Activated T-helper 2 cell treated with anti-CD3 and anti-CD28 coated beads, Interferon-gamma antibody, Interleukin-2, Interleukin-4, amounts not matched to agents 10 μg/mL and 5 μg/mL and 100 μg/mL, durations not matched to agents 14 hours and 24 hours and 36 hours (primary cell): ENCODE measurements at regions of chr11 and their contacts with region 1.

Region 1: GRCh38 chr11:121032546-121032945 is 8.6 kb downstream of the TBCEL start:
- DNase-seq: no peak
- H3K4me3 Mint-ChIP-seq: no peak overlapping the region
- H3K27ac Mint-ChIP-seq: no peak overlapping the region
- H3K4me1 Mint-ChIP-seq: peaks cover 30% of the 10 kb centered on the region
- H3K27me3 Mint-ChIP-seq: peaks cover 3% of the 10 kb centered on the region

Region 2: GRCh38 chr11:120344302-120345004 is 688.1 kb before region 1 on chr11:
- intact Hi-C with region 1: loop called (anchors 10 kb)
- DNase-seq: peak; percentile 62
- H3K4me3 Mint-ChIP-seq: peak overlapping the region; percentile 23
- H3K27ac Mint-ChIP-seq: peak overlapping the region; percentile 9
- H3K4me1 Mint-ChIP-seq: peaks cover 37% of the 10 kb centered on the region
- H3K27me3 Mint-ChIP-seq: peaks cover 59% of the 10 kb centered on the region

Region 3: DNA sequence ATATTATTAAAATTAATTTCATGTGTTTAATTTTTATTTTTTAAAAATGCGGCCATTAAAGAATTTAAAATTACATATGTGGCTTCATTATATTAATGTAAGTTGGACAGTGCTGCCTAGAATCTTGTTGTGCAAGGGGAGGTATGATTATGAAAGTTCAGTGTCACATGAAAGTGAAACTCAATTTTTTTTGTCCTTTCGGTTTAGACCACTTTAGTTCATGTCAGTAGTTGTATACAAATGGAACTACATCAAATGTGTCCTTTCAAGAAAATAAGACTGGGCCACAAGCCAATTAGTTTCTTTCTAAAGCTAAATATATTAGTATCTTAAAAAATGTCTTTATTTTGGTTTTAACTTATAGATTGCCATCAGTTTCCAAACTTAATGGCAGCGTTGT is 27.1 kb after region 1 on chr11:
- intact Hi-C with region 1: loop called (anchors 2 kb)
- DNase-seq: no peak
- H3K4me3 Mint-ChIP-seq: no peak overlapping the region
- H3K27ac Mint-ChIP-seq: no peak overlapping the region
- H3K4me1 Mint-ChIP-seq: peaks cover 10% of the 10 kb centered on the region
- H3K27me3 Mint-ChIP-seq: no peaks in the 10 kb centered on the region

Region 4: DNA sequence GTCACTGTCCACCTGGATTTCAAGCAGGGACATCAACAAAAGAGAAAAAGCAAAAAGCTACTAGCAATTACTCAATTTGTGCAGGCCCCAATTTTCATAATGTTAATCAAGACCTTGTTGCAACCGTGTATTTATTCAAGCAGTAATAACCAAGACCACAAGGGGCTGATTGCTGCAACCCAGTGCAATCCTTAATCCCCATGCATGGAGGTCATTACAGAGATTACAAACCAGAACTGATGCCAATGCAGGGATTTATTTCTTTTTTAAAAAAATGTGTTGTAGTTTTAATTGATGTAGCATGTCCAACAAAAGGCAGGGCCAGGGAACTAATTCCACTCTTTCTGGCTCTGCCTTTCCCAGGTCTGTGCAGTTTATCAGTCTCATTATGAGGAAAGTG is 86.9 kb after region 1 on chr11:
- intact Hi-C with region 1: no loop called
- DNase-seq: no peak
- H3K4me3 Mint-ChIP-seq: no peak overlapping the region
- H3K27ac Mint-ChIP-seq: no peak overlapping the region
- H3K4me1 Mint-ChIP-seq: no peaks in the 10 kb centered on the region
- H3K27me3 Mint-ChIP-seq: peaks cover 7% of the 10 kb centered on the region

Region 5: DNA sequence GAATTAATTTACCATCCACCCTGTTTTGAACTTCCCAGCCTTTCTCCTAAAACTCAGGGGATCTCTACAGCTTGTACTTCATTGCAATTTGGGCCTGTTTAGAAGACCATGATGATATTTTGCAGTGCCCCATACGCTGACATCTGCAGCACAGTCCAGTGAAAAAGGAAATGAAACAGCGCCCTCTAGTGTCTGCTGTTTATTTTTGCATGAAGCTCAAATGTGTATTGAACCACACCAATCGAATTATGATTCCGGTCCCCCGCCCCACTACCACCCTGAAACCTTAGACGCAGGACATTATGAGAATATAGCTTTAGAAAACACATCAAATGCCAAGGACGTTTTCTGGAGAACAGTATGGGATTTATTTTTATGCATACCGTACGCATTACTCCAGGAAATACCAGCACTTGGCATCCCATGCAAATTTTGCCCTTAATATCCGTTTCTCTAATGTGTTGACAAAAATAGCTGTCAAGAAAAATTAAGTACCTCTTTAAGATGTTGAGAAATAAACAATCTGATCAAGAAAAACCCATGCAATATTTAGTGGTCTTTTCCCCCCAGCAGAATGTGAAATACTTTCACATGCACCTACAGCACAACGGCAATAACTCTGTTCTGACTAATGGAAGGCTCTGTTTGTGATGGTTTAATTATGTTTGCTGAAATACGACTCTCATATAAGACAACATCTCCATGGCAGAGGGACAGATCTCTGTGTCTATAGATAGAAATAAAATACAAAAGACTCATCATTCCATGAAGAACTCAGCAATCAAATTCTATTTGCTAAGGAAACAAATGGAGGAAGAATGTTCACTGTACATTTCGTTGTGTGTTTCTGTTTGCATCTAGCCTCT is 162.4 kb after region 1 on chr11:
- intact Hi-C with region 1: loop called (anchors 10 kb)
- DNase-seq: peak; percentile 40
- H3K4me3 Mint-ChIP-seq: no peak overlapping the region
- H3K27ac Mint-ChIP-seq: no peak overlapping the region
- H3K4me1 Mint-ChIP-seq: no peaks in the 10 kb centered on the region
- H3K27me3 Mint-ChIP-seq: peaks cover 20% of the 10 kb centered on the region